Body of pancreas (tissue), 4 donors: ENCODE measurements at regions of chr13 and their contacts with region 1.

Region 1: GRCh38 chr13:113951246-113951999 is 22.5 kb downstream of the C13orf46 start:
- DNase-seq: peak; percentile 86 to 89 (median 88)
- ATAC-seq: peak; percentile 91
- H3K4me3 ChIP-seq: no peak overlapping the region
- H3K27ac ChIP-seq: peak overlapping the region in 1 of 4 donors; percentile 17
- H3K4me1 ChIP-seq: peaks cover 24% of the 10 kb centered on the region
- H3K27me3 ChIP-seq: no peaks in the 10 kb centered on the region
- CTCF ChIP-seq: peak; percentile 78 to 97 (median 95)
- POLR2A ChIP-seq: no peak

Region 2: GRCh38 chr13:113837554-113838355 is 113.7 kb before region 1 on chr13:
- intact Hi-C with region 1: no loop called
- DNase-seq: peak; percentile 80 to 96 (median 88)
- ATAC-seq: peak; percentile 82
- H3K4me3 ChIP-seq: no peak overlapping the region
- H3K27ac ChIP-seq: peak overlapping the region; percentile 70 to 86 (median 77)
- H3K4me1 ChIP-seq: peaks cover 47% of the 10 kb centered on the region
- H3K27me3 ChIP-seq: no peaks in the 10 kb centered on the region
- CTCF ChIP-seq: no peak
- POLR2A ChIP-seq: peak in 2 of 3 donors; percentile 40 to 41

Region 3: DNA sequence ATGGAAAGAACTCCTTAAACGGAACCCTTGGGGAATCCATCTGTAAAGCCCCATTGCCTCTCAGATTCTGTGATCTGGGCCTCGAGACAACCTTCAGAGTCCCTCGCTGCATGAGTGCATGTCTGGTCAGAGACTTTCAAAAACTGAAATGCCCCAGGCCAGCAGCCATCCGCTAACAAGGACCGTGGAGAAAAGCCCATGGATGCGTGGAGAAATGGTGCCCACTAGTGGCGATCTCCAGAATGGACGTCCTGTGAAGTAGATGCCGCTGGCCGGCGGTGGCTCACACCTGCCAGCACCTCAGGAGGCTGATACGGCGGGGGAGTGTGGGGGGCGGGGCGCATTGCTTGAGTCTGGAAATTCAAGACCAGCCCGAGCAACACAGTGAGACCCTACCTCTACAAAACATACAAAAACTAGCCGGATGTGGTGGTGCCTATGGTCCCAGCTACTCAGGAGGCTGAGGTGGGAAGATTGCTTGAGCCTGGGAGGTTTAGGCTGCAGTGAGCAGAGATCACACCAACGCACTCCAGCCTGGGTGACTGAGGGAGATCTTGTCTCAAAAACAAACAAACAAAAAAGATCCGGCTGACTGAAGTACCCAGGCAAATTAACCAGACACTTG is 275.4 kb after region 1 on chr13:
- intact Hi-C with region 1: loop called (anchors 5 kb)
- DNase-seq: peak; percentile 91 to 96 (median 94)
- ATAC-seq: peak; percentile 93
- H3K4me3 ChIP-seq: no peak overlapping the region
- H3K27ac ChIP-seq: peak overlapping the region; percentile 21 to 57 (median 27)
- H3K4me1 ChIP-seq: peaks cover 25% of the 10 kb centered on the region
- H3K27me3 ChIP-seq: no peaks in the 10 kb centered on the region
- CTCF ChIP-seq: peak; percentile 87 to 98 (median 98)
- POLR2A ChIP-seq: no peak